ENCODE measurements at regions of chr2 and their contacts with region 1.

Region 1: GRCh38 chr2:95149397-95149984 is 10.2 kb downstream of the ZNF514 start:
- DNase-seq: no peak
- ATAC-seq: no peak

Region 2: GRCh38 chr2:95126791-95127190 is 22.7 kb before region 1 on chr2:
- intact Hi-C with region 1: loop called (anchors 1 kb)
- DNase-seq: no peak
- ATAC-seq: no peak

Measured in Right ventricle myocardium inferior (tissue), 1 donor.